Activated CD4-positive, alpha-beta T cell treated with anti-CD3 and anti-CD28 coated beads for 36 hours (primary cell): ENCODE measurements at regions of chr2 and their contacts with region 1.

Region 1: DNA sequence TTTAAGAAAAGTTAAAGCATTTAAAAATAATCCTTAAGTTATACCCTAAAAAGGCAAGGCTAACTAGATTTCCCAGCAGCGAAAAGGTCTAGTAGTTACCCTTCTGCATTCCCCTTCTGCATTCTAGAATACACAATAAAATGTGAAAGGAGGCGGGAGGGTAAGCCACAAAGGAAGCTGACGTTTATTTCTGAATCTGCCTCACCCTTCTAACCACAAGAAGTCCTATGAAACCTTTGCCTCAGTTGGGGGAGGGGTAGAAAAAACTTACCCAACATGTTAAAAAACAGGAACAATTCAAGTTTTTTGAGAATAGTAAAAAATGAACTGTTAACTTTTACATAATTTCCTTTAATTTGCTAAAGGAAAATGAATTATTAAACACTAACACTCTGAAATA is 11.3 kb downstream of the STK17B start:
- DNase-seq: peak; percentile 73
- ATAC-seq: peak; percentile 45
- H3K4me3 Mint-ChIP-seq: peak overlapping the region; percentile 56
- H3K27ac Mint-ChIP-seq: peak overlapping the region; percentile 90
- H3K4me1 Mint-ChIP-seq: peaks cover 76% of the 10 kb centered on the region
- H3K27me3 Mint-ChIP-seq: no peaks in the 10 kb centered on the region

Region 2: GRCh38 chr2:196076778-196077568 is 83.1 kb before region 1 on chr2:
- CTCF ChIA-PET with region 1: interaction called, 9 read pairs
- POLR2A ChIA-PET with region 1: no interaction called
- intact Hi-C with region 1: loop called in 1 of 2 experiments (anchors 2 kb)
- DNase-seq: no peak
- ATAC-seq: no peak
- H3K4me3 Mint-ChIP-seq: no peak overlapping the region
- H3K27ac Mint-ChIP-seq: no peak overlapping the region
- H3K4me1 Mint-ChIP-seq: peaks cover 14% of the 10 kb centered on the region
- H3K27me3 Mint-ChIP-seq: no peaks in the 10 kb centered on the region

Region 3: DNA sequence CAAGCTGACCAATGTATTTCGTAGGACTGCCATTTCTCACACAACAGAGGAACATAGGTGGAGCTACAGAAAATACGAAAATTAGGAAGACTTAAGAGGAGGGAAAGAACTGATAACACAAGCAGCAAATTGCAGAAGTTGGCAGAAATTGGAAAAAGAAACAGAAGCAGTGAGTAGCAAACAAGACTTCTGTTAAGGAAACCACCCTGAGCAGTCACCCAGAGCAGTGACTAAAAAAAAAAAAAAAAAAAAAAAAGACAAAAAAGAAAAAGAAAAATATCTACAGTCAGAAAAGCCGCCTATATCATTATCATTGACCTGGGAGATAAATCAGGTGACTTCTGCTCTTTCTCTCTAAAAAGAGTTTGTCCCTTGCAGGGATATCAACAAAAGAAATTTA is 10.2 kb before region 1 on chr2:
- CTCF ChIA-PET with region 1: interaction called, 4 read pairs
- POLR2A ChIA-PET with region 1: interaction called, 3 read pairs
- intact Hi-C with region 1: loop called (anchors 1 to 2 kb)
- DNase-seq: no peak
- ATAC-seq: peak; percentile 27
- H3K4me3 Mint-ChIP-seq: peak overlapping the region; percentile 11
- H3K27ac Mint-ChIP-seq: peak overlapping the region; percentile 92
- H3K4me1 Mint-ChIP-seq: peaks cover 90% of the 10 kb centered on the region
- H3K27me3 Mint-ChIP-seq: no peaks in the 10 kb centered on the region

Region 4: GRCh38 chr2:196205881-196206435 is 45.9 kb after region 1 on chr2:
- CTCF ChIA-PET with region 1: interaction called, 3 read pairs
- POLR2A ChIA-PET with region 1: no interaction called
- intact Hi-C with region 1: loop called in 1 of 2 experiments (anchors 1 kb)
- DNase-seq: no peak
- ATAC-seq: no peak
- H3K4me3 Mint-ChIP-seq: no peak overlapping the region
- H3K27ac Mint-ChIP-seq: peak overlapping the region; percentile 35
- H3K4me1 Mint-ChIP-seq: peaks cover 45% of the 10 kb centered on the region
- H3K27me3 Mint-ChIP-seq: no peaks in the 10 kb centered on the region

Region 5: GRCh38 chr2:197434541-197435513 is 1274.7 kb after region 1 on chr2 and contains the start of gene SF3B1:
- CTCF ChIA-PET with region 1: no interaction called
- POLR2A ChIA-PET with region 1: no interaction called
- intact Hi-C with region 1: loop called in 1 of 2 experiments (anchors 10 kb)
- DNase-seq: peak; percentile 100
- ATAC-seq: peak; percentile 94
- H3K4me3 Mint-ChIP-seq: peak within 1 kb of the TSS; percentile 98
- H3K27ac Mint-ChIP-seq: peak within 1 kb of the TSS; percentile 99
- H3K4me1 Mint-ChIP-seq: peaks cover 44% of the 10 kb centered on the region
- H3K27me3 Mint-ChIP-seq: no peaks in the 10 kb centered on the region
- total RNA-seq, gene SF3B1: 262 to 277 TPM